PC-3 (cell line): ENCODE measurements at regions of chr6 and their contacts with region 1.

Region 1: DNA sequence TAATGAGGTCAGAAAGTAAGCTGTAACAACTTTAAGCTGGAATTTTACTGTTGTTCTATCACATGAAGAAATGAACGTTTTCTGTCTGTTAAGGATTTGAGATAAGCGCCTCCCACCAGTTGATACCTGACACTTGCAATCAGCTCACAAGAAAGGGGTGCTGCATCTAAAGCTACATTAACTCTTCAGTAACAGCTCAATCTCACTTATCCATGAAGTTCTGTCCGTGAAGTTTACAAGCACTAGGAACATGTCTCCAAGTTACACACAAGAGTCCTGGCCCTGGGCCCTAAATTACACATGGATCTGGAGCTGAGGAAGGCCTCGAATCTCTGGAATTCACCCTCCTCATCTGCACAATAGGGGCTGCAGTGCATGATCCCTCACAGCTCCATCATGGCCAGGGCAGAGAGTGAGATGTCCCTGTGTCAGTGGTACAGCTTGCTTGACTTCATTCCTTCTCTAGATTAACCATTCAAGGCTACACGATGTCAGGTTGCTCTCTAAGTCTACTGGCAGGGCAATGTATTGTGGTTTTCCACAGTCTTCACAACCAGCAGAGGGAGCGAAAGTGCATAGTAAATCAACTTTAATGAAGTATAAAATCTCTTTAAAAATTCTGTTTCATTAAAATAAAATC is 182.4 kb upstream of the MCHR2 start:
- DNase-seq: peak; percentile 70
- ATAC-seq: peak; percentile 66
- H3K4me3 ChIP-seq: peak overlapping the region; percentile 23; the same call in 1 of the 2 replicates
- H3K27ac ChIP-seq: peak overlapping the region; percentile 99
- H3K4me1 ChIP-seq: peaks cover 49% of the 10 kb centered on the region
- H3K27me3 ChIP-seq: no peaks in the 10 kb centered on the region
- CTCF ChIP-seq: peak; percentile 68

Region 2: DNA sequence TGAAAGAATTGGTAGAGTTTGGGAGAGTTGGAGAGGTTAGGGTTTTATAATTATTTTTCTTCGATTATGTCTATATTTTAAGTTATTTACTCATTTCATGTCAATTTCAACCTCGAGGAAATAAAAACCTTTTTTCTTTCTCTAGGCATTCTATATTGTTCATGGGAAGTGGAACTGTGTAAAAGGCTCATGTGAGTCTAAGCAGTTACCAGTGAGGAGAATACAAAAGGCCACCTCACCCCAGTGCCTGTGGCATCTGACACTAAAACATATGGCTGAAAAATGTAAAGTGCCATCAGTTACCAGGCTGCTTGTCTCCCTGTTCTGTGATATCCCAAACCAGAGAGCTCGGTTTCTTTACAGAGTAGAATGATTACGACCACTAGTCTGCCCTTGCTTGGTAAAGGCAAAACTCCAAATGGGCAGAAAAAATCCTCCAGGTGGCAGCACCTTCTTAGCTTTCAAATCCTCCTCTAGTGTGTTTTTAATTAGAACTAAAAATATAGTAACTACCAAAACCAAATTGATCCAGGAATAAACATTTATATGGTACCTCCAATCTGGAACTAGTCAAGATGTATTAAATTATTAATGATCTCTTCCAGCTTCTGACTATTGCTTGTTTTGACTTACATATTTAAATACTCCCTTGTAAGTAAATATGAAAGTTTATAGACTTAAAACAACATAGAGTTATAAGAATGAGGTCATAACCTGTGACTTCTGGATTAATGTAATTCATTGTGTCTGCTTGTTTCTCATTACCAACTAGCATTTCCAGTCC is 59.8 kb before region 1 on chr6:
- CTCF ChIA-PET with region 1: no interaction called
- POLR2A ChIA-PET with region 1: no interaction called
- intact Hi-C with region 1: loop called (anchors 1 kb)
- DNase-seq: peak; percentile 79
- ATAC-seq: peak; percentile 81
- H3K4me3 ChIP-seq: no peak overlapping the region
- H3K27ac ChIP-seq: no peak overlapping the region
- H3K4me1 ChIP-seq: peaks cover 11% of the 10 kb centered on the region; the same call in 1 of the 2 replicates
- H3K27me3 ChIP-seq: no peaks in the 10 kb centered on the region
- CTCF ChIP-seq: peak; percentile 84

Region 3: GRCh38 chr6:100381111-100381510 is 204.7 kb after region 1 on chr6:
- CTCF ChIA-PET with region 1: no interaction called
- POLR2A ChIA-PET with region 1: no interaction called
- intact Hi-C with region 1: loop called (anchors 10 kb)
- DNase-seq: no peak
- ATAC-seq: no peak
- H3K4me3 ChIP-seq: no peak overlapping the region
- H3K27ac ChIP-seq: no peak overlapping the region
- H3K4me1 ChIP-seq: no peaks in the 10 kb centered on the region
- H3K27me3 ChIP-seq: no peaks in the 10 kb centered on the region
- CTCF ChIP-seq: no peak

Region 4: GRCh38 chr6:100479179-100480035 is 303.0 kb after region 1 on chr6:
- CTCF ChIA-PET with region 1: no interaction called
- POLR2A ChIA-PET with region 1: no interaction called
- intact Hi-C with region 1: loop called (anchors 1 kb)
- DNase-seq: peak; percentile 65
- ATAC-seq: peak; percentile 47; the same call in 1 of the 2 replicates
- H3K4me3 ChIP-seq: no peak overlapping the region
- H3K27ac ChIP-seq: no peak overlapping the region
- H3K4me1 ChIP-seq: peaks cover 11% of the 10 kb centered on the region
- H3K27me3 ChIP-seq: no peaks in the 10 kb centered on the region
- CTCF ChIP-seq: peak; percentile 75